IMR-90 (cell line): ENCODE measurements at regions of chr9 and their contacts with region 1.

Region 1: GRCh38 chr9:19456996-19457692 is 48.3 kb downstream of the ACER2 start:
- DNase-seq: peak; percentile 75
- ATAC-seq: peak; percentile 98
- H3K4me3 ChIP-seq: peak overlapping the region; percentile 24; the same call in 1 of the 2 replicates
- H3K27ac ChIP-seq: no peak overlapping the region
- H3K4me1 ChIP-seq: no peaks in the 10 kb centered on the region
- H3K27me3 ChIP-seq: 0 out of 2 replicates have a peak, but pooled peaks cover 2% of the 10 kb centered on the region
- CTCF ChIP-seq: peak; percentile 93
- POLR2A ChIP-seq: no peak
- RAD21 ChIP-seq: peak; percentile 94

Region 2: GRCh38 chr9:18255158-18255629 is 1202.0 kb before region 1 on chr9:
- CTCF ChIA-PET with region 1: no interaction called
- POLR2A ChIA-PET with region 1: no interaction called
- dilution Hi-C with region 1: no loop called
- in situ Hi-C with region 1: no loop called
- intact Hi-C with region 1: loop called (anchors 5 kb)
- DNase-seq: peak; percentile 87
- ATAC-seq: peak; percentile 97
- H3K4me3 ChIP-seq: no peak overlapping the region
- H3K27ac ChIP-seq: no peak overlapping the region
- H3K4me1 ChIP-seq: no peaks in the 10 kb centered on the region
- H3K27me3 ChIP-seq: no peaks in the 10 kb centered on the region
- CTCF ChIP-seq: peak; percentile 93
- POLR2A ChIP-seq: peak; percentile 55; the same call in 1 of the 2 replicates
- RAD21 ChIP-seq: peak; percentile 97

Region 3: DNA sequence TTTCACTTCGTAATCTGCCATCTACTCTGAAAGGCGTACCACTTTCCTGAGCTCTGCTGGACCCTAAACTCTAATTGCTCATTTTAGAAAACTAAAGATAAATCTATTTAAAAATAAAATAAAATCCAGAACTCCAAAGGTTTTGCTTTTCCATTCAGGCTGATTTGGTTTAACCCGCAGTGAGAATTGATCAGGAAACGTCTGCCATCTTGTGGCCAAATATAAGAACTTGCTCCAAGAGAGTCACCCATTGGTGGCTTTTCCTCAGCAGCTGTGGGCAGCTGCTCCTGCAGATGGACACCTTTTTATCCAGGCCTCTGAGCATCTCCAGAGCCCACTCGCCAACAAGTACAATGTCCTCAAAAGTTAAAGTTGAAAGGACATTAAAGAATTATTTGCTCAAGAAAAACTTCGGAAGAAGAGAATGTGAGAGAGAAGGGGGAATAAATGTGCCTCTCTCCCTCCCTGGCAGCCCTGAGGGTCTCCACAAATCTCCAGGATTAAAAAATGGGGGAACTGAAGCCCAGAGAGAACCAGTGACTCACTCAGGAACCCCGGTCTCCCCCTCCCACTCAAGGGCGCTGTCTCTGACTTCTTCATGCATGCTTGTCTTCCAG is 428.2 kb before region 1 on chr9:
- CTCF ChIA-PET with region 1: interaction called, 5 read pairs
- POLR2A ChIA-PET with region 1: no interaction called
- dilution Hi-C with region 1: no loop called
- in situ Hi-C with region 1: no loop called
- intact Hi-C with region 1: loop called (anchors 1 kb)
- DNase-seq: peak; percentile 75
- ATAC-seq: peak; percentile 95
- H3K4me3 ChIP-seq: no peak overlapping the region
- H3K27ac ChIP-seq: no peak overlapping the region
- H3K4me1 ChIP-seq: no peaks in the 10 kb centered on the region
- H3K27me3 ChIP-seq: no peaks in the 10 kb centered on the region; the same call in 1 of the 2 replicates
- CTCF ChIP-seq: peak; percentile 83
- POLR2A ChIP-seq: no peak
- RAD21 ChIP-seq: peak; percentile 86

Region 4: GRCh38 chr9:19085295-19085694 is 371.8 kb before region 1 on chr9:
- CTCF ChIA-PET with region 1: no interaction called
- POLR2A ChIA-PET with region 1: no interaction called
- dilution Hi-C with region 1: no loop called
- in situ Hi-C with region 1: no loop called
- intact Hi-C with region 1: loop called (anchors 5 kb)
- DNase-seq: no peak
- ATAC-seq: no peak
- H3K4me3 ChIP-seq: no peak overlapping the region
- H3K27ac ChIP-seq: no peak overlapping the region
- H3K4me1 ChIP-seq: no peaks in the 10 kb centered on the region
- H3K27me3 ChIP-seq: no peaks in the 10 kb centered on the region
- CTCF ChIP-seq: peak; percentile 19; the same call in 1 of the 2 replicates
- POLR2A ChIP-seq: no peak
- RAD21 ChIP-seq: no peak

Region 5: DNA sequence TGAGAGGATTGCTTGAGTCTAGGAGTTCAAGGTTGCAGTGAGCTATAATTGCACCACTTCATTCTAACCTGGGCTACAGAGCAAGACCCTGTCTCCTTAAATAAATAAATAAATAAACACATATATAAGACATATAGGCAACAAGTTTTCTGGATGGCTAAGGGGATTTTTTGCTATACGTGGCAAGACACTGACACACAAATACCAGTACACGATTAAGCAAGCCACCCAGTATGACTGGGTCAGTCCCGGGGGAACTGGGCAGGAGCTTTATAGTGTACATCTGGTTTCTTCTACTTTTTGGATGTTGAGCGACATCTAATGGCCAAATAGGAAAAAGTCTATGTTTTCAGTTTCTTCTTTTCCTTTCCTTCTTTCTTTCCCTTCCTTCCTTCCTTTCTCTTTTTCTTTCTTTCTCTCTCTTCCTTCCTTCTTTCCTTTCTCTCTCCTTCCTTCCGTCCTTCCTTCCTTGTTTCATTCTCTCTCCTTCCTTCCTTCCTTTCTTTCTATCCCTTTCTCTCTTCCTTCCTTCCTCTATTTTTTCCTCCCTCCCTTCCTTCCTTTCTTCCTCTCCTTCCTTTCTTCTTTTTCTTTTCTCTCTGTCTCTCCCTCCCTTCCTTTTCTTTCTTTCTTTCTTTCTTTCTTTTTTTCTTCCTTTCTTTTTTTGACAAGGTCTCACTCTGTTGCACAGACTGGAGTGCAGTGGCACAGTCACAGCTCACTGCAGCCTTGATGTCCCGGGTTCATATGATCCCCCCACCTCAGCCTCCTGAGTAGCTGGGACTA is 282.8 kb before region 1 on chr9:
- CTCF ChIA-PET with region 1: interaction called, 6 read pairs
- POLR2A ChIA-PET with region 1: no interaction called
- dilution Hi-C with region 1: no loop called
- in situ Hi-C with region 1: no loop called
- intact Hi-C with region 1: loop called (anchors 2 kb)
- DNase-seq: peak; percentile 93
- ATAC-seq: peak; percentile 97
- H3K4me3 ChIP-seq: no peak overlapping the region
- H3K27ac ChIP-seq: no peak overlapping the region
- H3K4me1 ChIP-seq: no peaks in the 10 kb centered on the region
- H3K27me3 ChIP-seq: no peaks in the 10 kb centered on the region
- CTCF ChIP-seq: peak; percentile 78
- POLR2A ChIP-seq: no peak
- RAD21 ChIP-seq: peak; percentile 84

Region 6: DNA sequence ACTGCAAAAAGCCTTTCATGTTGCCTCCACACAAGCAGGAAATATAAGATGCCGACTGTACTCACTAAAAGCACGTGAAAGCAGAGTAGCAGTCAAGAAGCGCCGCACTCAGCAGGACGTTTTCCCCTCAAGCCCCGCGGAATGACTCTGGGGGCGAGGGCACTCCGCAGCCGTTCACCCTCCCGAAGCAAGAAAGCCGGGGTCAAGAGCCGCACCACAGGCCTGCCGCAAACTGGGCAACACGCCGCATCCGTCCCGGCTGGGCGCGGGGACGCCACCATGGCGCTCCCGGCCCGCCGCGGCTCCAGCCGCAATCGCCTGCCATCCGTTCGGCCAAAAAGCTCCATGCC is 77.5 kb before region 1 on chr9:
- CTCF ChIA-PET with region 1: no interaction called
- POLR2A ChIA-PET with region 1: no interaction called
- dilution Hi-C with region 1: no loop called
- in situ Hi-C with region 1: no loop called
- intact Hi-C with region 1: loop called (anchors 1 kb)
- DNase-seq: peak; percentile 16
- ATAC-seq: peak; percentile 28
- H3K4me3 ChIP-seq: peak overlapping the region; percentile 78
- H3K27ac ChIP-seq: peak overlapping the region; percentile 88
- H3K4me1 ChIP-seq: peaks cover 2% of the 10 kb centered on the region; the same call in 1 of the 2 replicates
- H3K27me3 ChIP-seq: no peaks in the 10 kb centered on the region
- CTCF ChIP-seq: no peak
- POLR2A ChIP-seq: no peak
- RAD21 ChIP-seq: no peak

Region 7: DNA sequence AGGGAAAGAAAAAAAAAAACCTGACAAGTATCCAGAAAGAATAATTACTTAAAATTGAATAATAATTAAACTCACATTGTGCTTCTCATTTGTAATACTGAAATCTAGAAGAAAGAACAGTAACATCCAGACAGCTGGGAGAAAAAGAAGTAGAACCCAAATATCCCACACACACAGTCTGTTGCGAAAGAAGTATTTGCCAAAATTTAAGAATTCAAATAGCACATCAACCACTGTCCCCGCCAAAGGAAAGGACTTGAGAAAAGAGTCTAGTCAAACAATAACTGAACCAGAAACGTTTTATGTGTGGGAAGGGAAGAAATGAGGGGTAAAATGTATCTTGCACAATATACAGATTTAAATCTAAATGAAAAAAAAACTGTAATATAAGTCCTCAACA is 962.4 kb after region 1 on chr9:
- CTCF ChIA-PET with region 1: no interaction called
- POLR2A ChIA-PET with region 1: no interaction called
- dilution Hi-C with region 1: no loop called
- in situ Hi-C with region 1: no loop called
- intact Hi-C with region 1: no loop called
- DNase-seq: no peak
- ATAC-seq: no peak
- H3K4me3 ChIP-seq: no peak overlapping the region
- H3K27ac ChIP-seq: no peak overlapping the region
- H3K4me1 ChIP-seq: no peaks in the 10 kb centered on the region
- H3K27me3 ChIP-seq: no peaks in the 10 kb centered on the region
- CTCF ChIP-seq: no peak
- POLR2A ChIP-seq: no peak
- RAD21 ChIP-seq: no peak

Region 8: GRCh38 chr9:20437476-20437875 is 980.3 kb after region 1 on chr9:
- CTCF ChIA-PET with region 1: no interaction called
- POLR2A ChIA-PET with region 1: no interaction called
- dilution Hi-C with region 1: no loop called
- in situ Hi-C with region 1: no loop called
- intact Hi-C with region 1: no loop called
- DNase-seq: peak; percentile 58
- ATAC-seq: peak; percentile 49
- H3K4me3 ChIP-seq: no peak overlapping the region
- H3K27ac ChIP-seq: no peak overlapping the region
- H3K4me1 ChIP-seq: peaks cover 3% of the 10 kb centered on the region
- H3K27me3 ChIP-seq: no peaks in the 10 kb centered on the region; the same call in 1 of the 2 replicates
- CTCF ChIP-seq: no peak
- POLR2A ChIP-seq: no peak
- RAD21 ChIP-seq: no peak